Ascending aorta (tissue), 2 donors: ENCODE measurements at regions of chr5 and their contacts with region 1.

Region 1: GRCh38 chr5:15499528-15500324 is at the start of gene FBXL7:
- DNase-seq: peak in 1 of 2 donors; percentile 85
- H3K4me3 ChIP-seq: peak within 1 kb of the TSS; percentile 77 to 90
- H3K27ac ChIP-seq: peak within 1 kb of the TSS; percentile 85 to 94
- H3K4me1 ChIP-seq: peaks cover 3 to 18% of the 10 kb centered on the region in 2 donors
- H3K27me3 ChIP-seq: no peaks in the 10 kb centered on the region
- CTCF ChIP-seq: peak in 1 of 3 experiments; percentile 35
- total RNA-seq, gene FBXL7: 30.4 TPM

Region 2: GRCh38 chr5:14664302-14665100 is 835.2 kb before region 1 on chr5 and contains the start of gene OTULIN:
- intact Hi-C with region 1: loop called (anchors 10 kb)
- DNase-seq: peak; percentile 70 to 95
- H3K4me3 ChIP-seq: peak within 1 kb of the TSS; percentile 72 to 83
- H3K27ac ChIP-seq: peak within 1 kb of the TSS; percentile 93 to 97
- H3K4me1 ChIP-seq: peaks cover 5 to 30% of the 10 kb centered on the region in 2 donors
- H3K27me3 ChIP-seq: no peaks in the 10 kb centered on the region
- CTCF ChIP-seq: peak in 1 of 3 experiments; percentile 5
- total RNA-seq, gene OTULIN: 56.9 TPM

Region 3: GRCh38 chr5:15105796-15106393 is 393.8 kb before region 1 on chr5:
- intact Hi-C with region 1: loop called (anchors 10 kb)
- DNase-seq: peak in 1 of 2 donors; percentile 75
- H3K4me3 ChIP-seq: no peak overlapping the region
- H3K27ac ChIP-seq: no peak overlapping the region
- H3K4me1 ChIP-seq: no peaks in the 10 kb centered on the region
- H3K27me3 ChIP-seq: no peaks in the 10 kb centered on the region
- CTCF ChIP-seq: peak; percentile 47 to 78 (median 64)

Region 4: GRCh38 chr5:15406478-15406877 is 93.2 kb before region 1 on chr5:
- intact Hi-C with region 1: no loop called
- DNase-seq: no peak
- H3K4me3 ChIP-seq: no peak overlapping the region
- H3K27ac ChIP-seq: no peak overlapping the region
- H3K4me1 ChIP-seq: no peaks in the 10 kb centered on the region
- H3K27me3 ChIP-seq: no peaks in the 10 kb centered on the region
- CTCF ChIP-seq: no peak

Region 5: GRCh38 chr5:15620501-15620900 is 120.8 kb after region 1 on chr5:
- intact Hi-C with region 1: loop called (anchors 2 kb)
- DNase-seq: peak in 1 of 2 donors; percentile 86
- H3K4me3 ChIP-seq: peak overlapping the region; percentile 28 to 36
- H3K27ac ChIP-seq: peak overlapping the region; percentile 82 to 86
- H3K4me1 ChIP-seq: peaks cover 0 to 20% of the 10 kb centered on the region in 2 donors
- H3K27me3 ChIP-seq: no peaks in the 10 kb centered on the region
- CTCF ChIP-seq: no peak

Region 6: DNA sequence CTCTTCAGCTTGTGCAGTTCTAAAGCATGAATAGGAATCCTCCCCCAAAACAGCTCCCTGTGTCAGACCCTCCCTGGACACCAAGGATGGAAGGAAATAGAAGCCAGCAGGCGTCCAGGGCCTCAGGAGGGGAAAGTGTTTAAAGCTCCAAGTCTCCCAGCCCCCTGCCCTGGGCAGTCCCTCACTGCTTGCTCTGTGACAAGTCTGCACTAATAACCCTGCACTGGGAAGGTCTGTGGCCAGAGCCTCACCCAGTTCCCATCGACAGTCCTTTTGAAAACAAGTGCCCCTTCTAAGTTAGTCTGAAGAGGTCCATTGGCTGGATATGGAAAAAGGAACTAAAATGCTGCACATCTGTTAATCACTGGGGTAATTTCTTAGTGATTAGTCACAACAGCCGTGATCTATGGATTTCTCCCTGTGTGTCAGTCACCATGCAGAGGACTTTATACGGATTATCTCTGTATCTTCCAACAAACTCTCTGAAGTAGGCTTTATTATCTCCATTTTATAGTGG is 195.5 kb after region 1 on chr5:
- intact Hi-C with region 1: loop called (anchors 5 kb)
- DNase-seq: no peak
- H3K4me3 ChIP-seq: no peak overlapping the region
- H3K27ac ChIP-seq: peak overlapping the region; percentile 55 to 83
- H3K4me1 ChIP-seq: peaks cover 5 to 39% of the 10 kb centered on the region in 2 donors
- H3K27me3 ChIP-seq: no peaks in the 10 kb centered on the region
- CTCF ChIP-seq: no peak

Region 7: GRCh38 chr5:15794052-15794985 is 294.6 kb after region 1 on chr5:
- intact Hi-C with region 1: loop called (anchors 5 kb)
- DNase-seq: no peak
- H3K4me3 ChIP-seq: no peak overlapping the region
- H3K27ac ChIP-seq: no peak overlapping the region
- H3K4me1 ChIP-seq: peaks cover 0 to 12% of the 10 kb centered on the region in 2 donors
- H3K27me3 ChIP-seq: no peaks in the 10 kb centered on the region
- CTCF ChIP-seq: peak in 2 of 3 experiments; percentile 22 to 27